Activated naive CD4-positive, alpha-beta T cell treated with anti-CD3 and anti-CD28 coated beads, Interleukin-2, amount 10 ng/mL, durations not matched to agents 7 days and 5 days (primary cell): ENCODE measurements at regions of chr1 and their contacts with region 1.

Region 1: DNA sequence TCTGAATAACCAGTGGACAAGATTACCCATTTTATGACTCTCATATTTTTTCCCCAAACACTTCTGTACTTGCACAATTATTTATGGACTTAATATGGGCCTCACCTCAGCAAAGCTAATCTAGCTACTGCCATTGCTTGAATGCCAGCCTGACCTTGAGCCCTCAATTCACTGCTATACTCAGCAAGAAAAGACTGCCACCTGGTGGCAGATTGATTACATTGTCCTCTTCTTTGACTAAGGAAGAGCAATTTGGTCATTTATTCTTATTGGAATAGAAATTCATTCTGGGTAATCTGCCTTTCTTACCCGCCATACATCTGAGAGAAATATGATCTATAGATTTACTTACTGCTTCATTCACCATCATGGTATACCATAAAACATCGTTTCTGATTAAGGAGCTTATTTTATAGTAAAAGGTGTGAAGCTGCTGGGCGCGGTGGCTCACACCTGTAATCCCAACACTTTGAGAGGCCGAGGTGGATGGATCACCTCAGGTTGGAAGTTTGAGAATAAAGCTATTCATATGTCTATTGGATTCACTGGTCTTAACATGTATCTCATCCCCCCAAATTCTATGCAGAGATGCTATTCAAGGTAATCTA is 32.9 kb upstream of the DIPK1A start:
- DNase-seq: peak; percentile 80
- H3K4me3 Mint-ChIP-seq: no peak overlapping the region
- H3K27ac Mint-ChIP-seq: peak overlapping the region; percentile 66
- H3K4me1 Mint-ChIP-seq: peaks cover 51% of the 10 kb centered on the region
- H3K27me3 Mint-ChIP-seq: peaks cover 10% of the 10 kb centered on the region

Region 2: GRCh38 chr1:92851729-92852128 is 142.5 kb before region 1 on chr1:
- CTCF ChIA-PET with region 1: interaction called, 113 read pairs
- DNase-seq: no peak
- H3K4me3 Mint-ChIP-seq: no peak overlapping the region
- H3K27ac Mint-ChIP-seq: no peak overlapping the region
- H3K4me1 Mint-ChIP-seq: peaks cover 21% of the 10 kb centered on the region
- H3K27me3 Mint-ChIP-seq: no peaks in the 10 kb centered on the region

Region 3: GRCh38 chr1:92877792-92878191 is 116.4 kb before region 1 on chr1:
- CTCF ChIA-PET with region 1: interaction called, 10 read pairs
- DNase-seq: no peak
- H3K4me3 Mint-ChIP-seq: no peak overlapping the region
- H3K27ac Mint-ChIP-seq: peak overlapping the region; percentile 63
- H3K4me1 Mint-ChIP-seq: peaks cover 34% of the 10 kb centered on the region
- H3K27me3 Mint-ChIP-seq: no peaks in the 10 kb centered on the region

Region 4: GRCh38 chr1:92951141-92951582 is 43.0 kb before region 1 on chr1:
- CTCF ChIA-PET with region 1: interaction called, 20 read pairs
- DNase-seq: peak; percentile 58
- H3K4me3 Mint-ChIP-seq: no peak overlapping the region
- H3K27ac Mint-ChIP-seq: no peak overlapping the region
- H3K4me1 Mint-ChIP-seq: peaks cover 46% of the 10 kb centered on the region
- H3K27me3 Mint-ChIP-seq: no peaks in the 10 kb centered on the region

Region 5: DNA sequence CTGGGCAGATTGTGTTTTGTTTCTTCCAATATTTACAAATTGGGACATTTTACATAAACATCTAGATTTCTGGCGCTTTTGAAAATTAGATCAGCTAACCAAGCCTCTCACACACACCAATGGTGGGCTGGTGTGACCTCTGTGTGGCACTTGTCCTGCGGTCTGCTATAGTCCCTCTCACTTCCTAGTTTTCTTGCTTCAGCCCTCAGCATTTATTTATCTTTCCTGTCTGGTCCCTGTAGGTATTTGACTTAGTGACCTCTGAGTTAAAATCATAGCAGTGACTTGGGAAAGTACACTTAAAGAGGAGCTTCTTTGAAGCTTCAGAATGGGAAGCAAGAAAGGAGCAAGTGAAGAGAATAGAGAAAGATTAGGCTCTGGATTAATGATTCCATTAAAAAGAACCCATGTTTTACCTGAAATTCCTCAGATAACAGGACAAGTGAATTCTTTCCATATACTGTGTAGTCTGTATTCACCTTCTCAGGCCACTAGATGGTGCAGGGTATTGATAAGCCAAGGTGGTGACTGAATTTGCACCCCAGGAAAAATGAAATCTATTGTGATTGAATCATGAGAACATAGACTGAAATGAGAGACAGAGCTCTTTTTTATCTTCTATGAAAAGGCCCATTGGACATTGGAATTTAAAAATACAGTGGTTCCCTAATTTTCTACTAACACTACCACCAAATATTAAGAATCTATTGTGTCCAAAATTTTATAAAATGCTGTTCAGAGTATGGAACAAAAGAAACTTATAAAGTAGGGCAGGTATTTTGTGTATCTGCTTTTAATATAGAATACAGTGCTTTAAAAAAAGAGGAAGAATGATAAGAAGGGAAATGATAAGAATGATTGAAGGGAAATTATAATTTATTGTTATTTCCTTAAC is 25.8 kb before region 1 on chr1:
- CTCF ChIA-PET with region 1: interaction called, 375 read pairs
- DNase-seq: peak; percentile 37
- H3K4me3 Mint-ChIP-seq: no peak overlapping the region
- H3K27ac Mint-ChIP-seq: no peak overlapping the region
- H3K4me1 Mint-ChIP-seq: peaks cover 43% of the 10 kb centered on the region
- H3K27me3 Mint-ChIP-seq: no peaks in the 10 kb centered on the region

Region 6: GRCh38 chr1:93005252-93005598 is 11.0 kb after region 1 on chr1:
- CTCF ChIA-PET with region 1: interaction called, 15 read pairs
- DNase-seq: no peak
- H3K4me3 Mint-ChIP-seq: no peak overlapping the region
- H3K27ac Mint-ChIP-seq: no peak overlapping the region
- H3K4me1 Mint-ChIP-seq: no peaks in the 10 kb centered on the region
- H3K27me3 Mint-ChIP-seq: peaks cover 42% of the 10 kb centered on the region